ENCODE measurements at regions of chr20 and their contacts with region 1.

Region 1: GRCh38 chr20:33415948-33416347 is 14.6 kb upstream of the CDK5RAP1 start:
- DNase-seq: peak; percentile 64 to 79
- H3K4me3 ChIP-seq: no peak overlapping the region
- H3K27ac ChIP-seq: peak overlapping the region in 1 of 2 donors; percentile 29
- H3K4me1 ChIP-seq: peaks cover 0 to 32% (median 8%) of the 10 kb centered on the region in 4 donors
- H3K27me3 ChIP-seq: no peaks in the 10 kb centered on the region
- CTCF ChIP-seq: peak; percentile 68

Region 2: DNA sequence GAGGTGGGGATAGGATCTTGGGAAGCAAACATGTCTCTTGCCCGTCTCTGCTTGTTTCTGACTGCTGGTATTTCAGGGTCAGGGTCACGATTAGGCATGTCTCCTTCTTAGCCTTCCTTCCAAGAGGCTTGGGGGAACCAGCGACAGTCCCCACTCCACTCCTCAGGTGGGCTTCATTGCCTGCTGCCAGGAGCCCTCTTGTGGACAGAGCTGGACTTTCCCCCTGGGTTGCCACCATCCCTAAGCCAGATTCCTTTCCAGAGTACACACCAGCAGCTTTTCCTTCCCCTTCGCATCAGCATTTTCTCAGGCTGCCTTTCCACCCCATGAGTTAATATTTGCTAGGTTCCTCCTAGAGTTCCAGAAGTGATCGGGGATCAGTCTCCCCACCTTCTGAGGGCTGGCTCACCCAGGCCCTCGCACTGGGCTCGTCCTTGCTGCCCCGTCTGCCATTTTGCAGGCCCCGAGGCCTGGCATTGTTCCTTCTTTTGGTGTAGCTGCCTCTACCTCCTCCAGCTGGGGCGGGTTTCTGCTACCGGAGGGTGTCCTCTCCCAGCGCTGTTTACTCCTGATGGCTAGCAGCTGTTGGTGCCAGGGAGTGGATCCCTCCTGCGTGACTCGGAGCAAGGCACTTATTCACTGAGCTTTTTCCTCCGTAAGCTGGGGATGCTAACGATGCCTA is 237.4 kb after region 1 on chr20:
- intact Hi-C with region 1: loop called (anchors 10 kb)
- DNase-seq: peak in 1 of 2 donors; percentile 81
- H3K4me3 ChIP-seq: peak overlapping the region in 1 of 2 donors; percentile 7
- H3K27ac ChIP-seq: peak overlapping the region in 1 of 2 donors; percentile 31
- H3K4me1 ChIP-seq: peaks cover 0 to 36% (median 17%) of the 10 kb centered on the region in 4 donors
- H3K27me3 ChIP-seq: no peaks in the 10 kb centered on the region
- CTCF ChIP-seq: peak; percentile 74 to 79

Measured in tibial artery (tissue), 4 donors.